K562 (cell line): ENCODE measurements at regions of chr22 and their contacts with region 1.

Region 1: DNA sequence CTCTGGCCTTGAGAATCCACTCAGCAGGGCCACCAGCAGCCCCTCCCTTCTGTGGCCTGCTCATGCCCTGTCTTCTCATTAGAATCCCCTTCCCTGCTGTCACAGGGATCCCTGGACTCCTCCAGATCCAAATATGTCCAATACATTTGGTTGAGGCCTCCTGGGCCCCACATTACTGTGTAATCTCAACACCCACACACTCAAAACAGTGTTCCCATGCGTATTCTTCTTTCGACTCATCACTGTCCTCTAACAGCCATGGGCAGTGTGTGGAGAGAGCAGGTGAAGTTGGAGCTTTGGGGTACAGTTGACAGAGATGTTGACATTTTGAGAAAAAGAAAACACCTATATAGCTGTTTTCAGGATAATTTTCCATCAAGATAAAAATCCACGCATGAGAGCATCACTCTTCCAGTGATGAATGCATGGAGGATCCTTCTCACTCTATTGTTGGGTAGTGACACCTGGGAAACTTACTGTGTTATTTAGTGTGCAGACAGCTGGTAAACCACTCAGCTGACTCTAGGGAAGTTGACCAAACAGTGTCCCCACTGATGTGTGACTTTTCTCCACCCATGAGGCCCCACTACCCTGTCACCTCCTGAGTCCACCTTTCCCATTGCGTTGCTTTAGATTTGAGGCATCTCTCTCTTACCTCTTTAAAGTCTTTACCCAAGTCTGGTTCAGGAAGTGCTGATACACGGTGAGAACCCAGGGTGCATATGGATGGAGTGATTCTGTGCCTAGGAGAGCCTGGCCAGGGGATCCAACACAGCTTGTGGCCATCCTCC is 28.7 kb upstream of the VPREB1 start:
- DNase-seq: peak in 1 of 4 experiments; percentile 41
- ATAC-seq: peak; percentile 7; the same call in 1 of the 3 replicates
- H3K4me3 ChIP-seq: no peak overlapping the region
- H3K27ac ChIP-seq: no peak overlapping the region
- H3K4me1 ChIP-seq: 0 out of 5 replicates have a peak, but pooled peaks cover 0 to 2% of the 10 kb centered on the region in 2 experiments
- H3K27me3 ChIP-seq: peaks cover 31 to 47% of the 10 kb centered on the region in 2 experiments
- CTCF ChIP-seq: no peak
- EP300 ChIP-seq: no peak
- POLR2A ChIP-seq: no peak
- RAD21 ChIP-seq: no peak

Region 2: DNA sequence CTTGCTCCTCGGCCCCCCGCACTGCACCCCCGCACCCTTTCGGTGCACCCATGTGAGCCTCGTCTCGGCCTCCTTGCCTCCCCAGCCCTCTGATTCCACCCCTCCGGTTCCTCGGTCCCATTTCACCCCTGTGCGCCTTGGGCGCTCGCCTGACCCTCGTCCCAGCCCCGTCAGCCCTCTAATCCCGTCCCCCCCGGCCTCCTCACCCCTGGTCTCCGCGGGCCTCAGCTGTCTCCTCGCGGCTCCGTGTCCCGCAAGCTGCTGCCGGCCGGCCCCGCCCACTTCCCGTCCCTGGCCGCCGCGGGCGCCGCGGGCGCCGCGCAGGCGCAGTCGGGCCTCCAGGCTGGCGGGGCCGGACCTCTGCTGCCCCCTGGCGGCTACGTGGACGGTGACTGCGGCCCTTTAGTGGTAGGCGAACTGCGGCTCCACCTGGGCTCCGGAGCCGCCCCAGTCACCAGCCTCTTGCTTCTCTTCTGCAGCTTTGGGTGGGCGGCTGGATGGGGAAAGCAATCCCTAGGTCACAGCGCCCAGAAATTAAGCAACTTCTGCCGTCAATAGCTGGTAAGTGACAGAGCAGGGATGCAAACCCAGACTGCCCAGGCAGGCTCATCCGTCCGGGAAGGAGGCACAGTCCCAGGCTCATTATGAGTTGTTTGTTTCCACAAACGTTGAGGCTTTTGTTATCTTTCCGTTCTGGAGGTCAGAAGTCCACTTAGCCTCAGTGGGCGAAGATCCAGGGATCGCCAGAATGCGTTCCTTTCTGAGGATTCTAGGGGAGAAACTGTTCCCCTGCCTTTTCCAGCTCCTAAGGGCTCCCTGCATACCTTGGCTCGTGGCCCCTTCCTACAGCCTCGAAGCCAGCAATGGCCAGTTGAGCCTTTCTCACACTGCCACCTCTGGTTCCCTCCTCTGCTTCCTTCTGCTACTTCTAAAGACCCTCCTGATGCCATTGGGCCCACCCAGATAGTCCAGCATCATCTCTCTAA is 263.0 kb before region 1 on chr22 and contains the start of gene PPM1F:
- CTCF ChIA-PET with region 1: no interaction called
- POLR2A ChIA-PET with region 1: no interaction called
- in situ Hi-C with region 1: loop called (anchors 5 kb)
- intact Hi-C with region 1: no loop called
- DNase-seq: peak; percentile 100
- ATAC-seq: peak; percentile 84
- H3K4me3 ChIP-seq: peak within 1 kb of the TSS; percentile 66
- H3K27ac ChIP-seq: peak within 1 kb of the TSS; percentile 68
- H3K4me1 ChIP-seq: peaks cover 25 to 39% of the 10 kb centered on the region in 2 experiments
- H3K27me3 ChIP-seq: no peaks in the 10 kb centered on the region
- CTCF ChIP-seq: peak; percentile 99 to 100 (median 100)
- EP300 ChIP-seq: peak; percentile 72
- POLR2A ChIP-seq: no peak
- RAD21 ChIP-seq: no peak
- polyA plus RNA-seq, gene PPM1F: 2.1 to 4.5 TPM

Region 3: DNA sequence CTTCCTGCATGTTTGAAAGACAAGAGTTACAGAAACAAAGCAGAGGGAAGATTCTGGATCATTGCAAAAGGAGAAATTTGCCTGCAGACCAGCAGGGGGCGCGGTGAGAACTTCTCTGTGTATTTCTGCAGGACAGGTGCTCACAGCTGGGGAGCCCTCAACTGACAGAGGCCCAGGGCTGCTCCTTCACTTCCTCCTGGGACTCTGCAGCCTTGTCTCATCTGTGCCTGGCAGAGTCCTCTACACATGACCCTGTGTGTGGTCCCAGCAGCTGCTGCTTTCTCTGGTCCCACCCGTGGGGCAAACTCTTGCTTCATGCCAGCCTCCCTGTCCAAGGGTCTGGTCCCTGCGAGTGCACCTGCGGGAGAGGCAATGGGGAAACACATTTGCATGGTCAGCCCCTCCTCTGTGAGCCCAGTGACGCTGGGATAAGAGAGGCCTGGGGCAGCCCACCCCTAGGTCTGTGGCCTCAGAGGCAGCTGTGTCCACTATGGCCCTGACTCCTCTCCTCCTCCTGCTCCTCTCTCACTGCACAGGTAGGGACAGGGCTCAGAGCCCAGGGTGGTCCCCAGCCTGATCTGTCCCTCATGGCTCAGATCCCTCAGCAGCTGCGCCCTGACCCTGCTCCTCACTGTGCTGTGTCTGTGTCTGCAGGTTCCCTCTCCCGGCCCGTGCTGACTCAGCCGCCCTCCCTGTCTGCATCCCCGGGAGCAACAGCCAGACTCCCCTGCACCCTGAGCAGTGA is 14.5 kb before region 1 on chr22:
- CTCF ChIA-PET with region 1: interaction called, 3 read pairs
- POLR2A ChIA-PET with region 1: interaction called, 33 read pairs
- in situ Hi-C with region 1: no loop called
- intact Hi-C with region 1: no loop called
- DNase-seq: peak; percentile 90 to 95 (median 91)
- ATAC-seq: peak; percentile 87
- H3K4me3 ChIP-seq: no peak overlapping the region
- H3K27ac ChIP-seq: no peak overlapping the region
- H3K4me1 ChIP-seq: peaks cover 0 to 13% of the 10 kb centered on the region in 2 experiments; a peak in 2 of 5 replicates
- H3K27me3 ChIP-seq: peaks cover 44 to 70% of the 10 kb centered on the region in 2 experiments
- CTCF ChIP-seq: peak in 2 of 3 experiments; percentile 99 to 100; a peak in 4 of 6 replicates
- EP300 ChIP-seq: 0 out of 2 replicates have a peak, but pooled peaks have one; percentile 19
- POLR2A ChIP-seq: no peak
- RAD21 ChIP-seq: peak; percentile 36 to 83

Region 4: DNA sequence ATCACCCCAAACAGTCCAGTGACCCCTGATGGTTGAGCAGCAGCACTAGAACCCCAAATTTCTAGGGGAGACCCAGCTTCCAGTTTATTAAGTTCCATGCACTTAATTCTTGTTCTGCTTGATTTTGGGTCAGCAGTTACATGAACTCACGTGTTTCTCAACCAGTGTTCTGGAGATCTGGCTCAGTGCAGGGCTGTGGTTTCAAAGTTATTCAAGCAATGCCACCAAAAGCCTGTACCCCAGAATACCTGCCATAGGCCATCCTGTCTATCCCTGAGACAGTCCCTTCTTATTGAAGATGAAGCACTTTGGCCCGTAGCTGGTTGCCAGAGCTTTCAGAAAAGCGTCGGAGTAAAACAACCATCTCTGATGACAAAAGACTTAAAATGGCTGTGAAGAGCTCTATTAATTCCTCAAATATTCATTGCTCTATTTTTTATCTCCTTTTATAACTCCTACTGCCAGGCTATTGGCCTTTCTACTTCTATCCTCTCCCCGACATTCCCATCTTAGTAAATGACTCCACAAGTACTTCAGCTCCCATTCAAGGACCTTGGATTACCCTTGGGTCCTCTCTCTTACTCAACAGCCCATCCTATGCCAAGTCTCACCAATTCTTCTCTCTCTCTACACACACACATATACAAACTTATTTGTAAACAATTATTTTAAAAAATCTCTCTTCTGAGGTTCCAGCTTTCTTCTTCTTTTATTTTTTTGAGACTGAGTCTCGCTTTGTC is 10.8 kb after region 1 on chr22:
- CTCF ChIA-PET with region 1: no interaction called
- POLR2A ChIA-PET with region 1: interaction called, 14 read pairs
- in situ Hi-C with region 1: no loop called
- intact Hi-C with region 1: no loop called
- DNase-seq: no peak
- ATAC-seq: no peak
- H3K4me3 ChIP-seq: no peak overlapping the region
- H3K27ac ChIP-seq: no peak overlapping the region
- H3K4me1 ChIP-seq: no peaks in the 10 kb centered on the region
- H3K27me3 ChIP-seq: peaks cover 32 to 39% of the 10 kb centered on the region in 2 experiments
- CTCF ChIP-seq: no peak
- EP300 ChIP-seq: no peak
- POLR2A ChIP-seq: no peak
- RAD21 ChIP-seq: no peak

Region 5: DNA sequence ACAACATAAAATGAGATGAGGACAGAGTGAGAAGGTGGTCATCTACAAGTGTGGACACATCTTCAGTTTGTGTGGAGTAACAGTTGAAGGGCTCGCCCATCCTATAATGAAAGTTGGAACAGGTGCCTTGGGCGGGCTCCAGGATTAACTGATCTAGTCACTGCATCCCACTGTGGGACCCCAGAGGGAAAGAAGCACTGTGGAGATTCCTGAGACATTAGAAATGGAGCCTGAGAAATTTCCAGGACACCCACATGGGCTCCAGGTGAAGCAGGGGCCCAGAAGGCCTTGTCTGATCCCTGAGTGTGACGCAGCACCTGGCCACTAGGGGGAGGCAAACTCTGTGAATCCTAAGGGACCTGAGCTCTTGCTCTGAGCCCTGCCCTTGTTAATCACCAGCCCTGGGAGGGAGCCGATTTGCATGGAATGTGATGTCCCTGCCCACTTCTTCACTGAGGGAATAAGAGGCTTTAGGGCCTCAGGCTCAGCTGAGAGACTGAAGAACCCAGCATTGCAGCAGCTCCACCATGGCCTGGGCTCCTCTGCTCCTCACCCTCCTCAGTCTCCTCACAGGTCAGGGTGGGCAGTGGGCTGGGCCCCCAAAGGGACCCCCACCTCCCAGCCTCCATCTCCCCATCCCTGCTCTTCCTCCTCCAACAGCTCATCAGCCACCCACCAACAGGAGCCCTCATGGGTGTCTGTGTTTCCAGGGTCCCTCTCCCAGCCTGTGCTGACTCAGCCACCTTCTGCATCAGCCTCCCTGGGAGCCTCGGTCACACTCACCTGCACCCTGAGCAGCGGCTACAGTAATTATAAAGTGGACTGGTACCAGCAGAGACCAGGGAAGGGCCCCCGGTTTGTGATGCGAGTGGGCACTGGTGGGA is 127.1 kb after region 1 on chr22:
- CTCF ChIA-PET with region 1: interaction called, 3 read pairs
- POLR2A ChIA-PET with region 1: interaction called, 3 read pairs
- in situ Hi-C with region 1: loop called (anchors 5 kb)
- intact Hi-C with region 1: no loop called
- DNase-seq: peak; percentile 95 to 99 (median 98)
- ATAC-seq: peak; percentile 98
- H3K4me3 ChIP-seq: no peak overlapping the region
- H3K27ac ChIP-seq: no peak overlapping the region
- H3K4me1 ChIP-seq: no peaks in the 10 kb centered on the region
- H3K27me3 ChIP-seq: peaks cover 11 to 33% of the 10 kb centered on the region in 2 experiments; a peak in 3 of 5 replicates
- CTCF ChIP-seq: peak in 2 of 3 experiments; percentile 99 to 100; a peak in 4 of 6 replicates
- EP300 ChIP-seq: no peak
- POLR2A ChIP-seq: no peak
- RAD21 ChIP-seq: peak in 1 of 2 experiments; percentile 92; a peak in 2 of 4 replicates

Region 6: GRCh38 chr22:23163665-23164064 is 947.8 kb after region 1 on chr22:
- CTCF ChIA-PET with region 1: no interaction called
- POLR2A ChIA-PET with region 1: no interaction called
- in situ Hi-C with region 1: no loop called
- intact Hi-C with region 1: no loop called
- DNase-seq: no peak
- ATAC-seq: no peak
- H3K4me3 ChIP-seq: no peak overlapping the region
- H3K27ac ChIP-seq: no peak overlapping the region
- H3K4me1 ChIP-seq: peaks cover 0 to 10% of the 10 kb centered on the region in 2 experiments; a peak in 3 of 5 replicates
- H3K27me3 ChIP-seq: peaks cover 76 to 89% of the 10 kb centered on the region in 2 experiments
- CTCF ChIP-seq: no peak
- EP300 ChIP-seq: no peak
- POLR2A ChIP-seq: no peak
- RAD21 ChIP-seq: no peak